ENCODE measurements at regions of chr1 and their contacts with region 1.

Region 1: GRCh38 chr1:7235871-7236517 is 450.7 kb downstream of the CAMTA1 start:
- DNase-seq: no peak
- ATAC-seq: no peak
- H3K4me3 ChIP-seq: no peak overlapping the region
- H3K27ac ChIP-seq: no peak overlapping the region
- H3K4me1 ChIP-seq: no peaks in the 10 kb centered on the region
- H3K27me3 ChIP-seq: no peaks in the 10 kb centered on the region
- CTCF ChIP-seq: no peak
- POLR2A ChIP-seq: no peak
- RAD21 ChIP-seq: no peak

Region 2: GRCh38 chr1:7224644-7225043 is 11.3 kb before region 1 on chr1:
- CTCF ChIA-PET with region 1: no interaction called
- POLR2A ChIA-PET with region 1: no interaction called
- RAD21 ChIA-PET with region 1: no interaction called
- intact Hi-C with region 1: no loop called
- DNase-seq: peak; percentile 37
- ATAC-seq: peak; percentile 91
- H3K4me3 ChIP-seq: no peak overlapping the region
- H3K27ac ChIP-seq: no peak overlapping the region
- H3K4me1 ChIP-seq: peaks cover 9 to 24% of the 10 kb centered on the region in 2 experiments
- H3K27me3 ChIP-seq: no peaks in the 10 kb centered on the region
- CTCF ChIP-seq: peak; percentile 55 to 80 (median 71)
- POLR2A ChIP-seq: no peak
- RAD21 ChIP-seq: peak; percentile 96

Region 3: DNA sequence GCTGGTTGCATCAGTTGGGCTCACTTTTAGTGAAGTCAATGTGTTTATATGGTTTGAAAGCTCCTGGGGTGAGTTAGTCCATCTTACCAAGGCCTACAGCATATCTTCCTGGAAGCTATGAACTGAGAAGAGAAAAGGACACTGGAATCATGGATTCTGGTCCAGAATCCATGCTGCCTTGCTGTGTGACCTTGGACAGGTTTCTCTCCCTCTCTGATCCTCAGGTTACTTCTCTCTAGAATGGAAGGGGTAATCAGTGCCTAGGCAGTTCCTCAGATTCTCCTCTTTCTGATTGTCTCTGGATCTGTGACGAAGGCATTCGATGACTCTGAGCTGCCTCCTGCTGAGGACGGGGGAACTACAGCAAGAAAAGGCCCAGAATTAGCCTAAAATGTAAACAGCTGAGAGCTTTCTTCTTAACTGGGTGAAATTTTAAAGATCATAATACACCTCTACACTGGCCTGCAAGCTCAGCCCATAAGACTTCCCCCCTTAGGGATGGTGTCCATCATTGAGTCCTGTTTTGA is 110.1 kb after region 1 on chr1:
- CTCF ChIA-PET with region 1: no interaction called
- POLR2A ChIA-PET with region 1: no interaction called
- RAD21 ChIA-PET with region 1: no interaction called
- intact Hi-C with region 1: loop called (anchors 5 kb)
- DNase-seq: no peak
- ATAC-seq: no peak
- H3K4me3 ChIP-seq: no peak overlapping the region
- H3K27ac ChIP-seq: no peak overlapping the region
- H3K4me1 ChIP-seq: no peaks in the 10 kb centered on the region
- H3K27me3 ChIP-seq: no peaks in the 10 kb centered on the region
- CTCF ChIP-seq: 0 out of 6 replicates have a peak, but pooled peaks of 1 of the 3 experiments have one; percentile 21
- POLR2A ChIP-seq: no peak
- RAD21 ChIP-seq: peak; percentile 36; the same call in 1 of the 2 replicates